Dorsolateral prefrontal cortex (tissue), 120 donors: ENCODE measurements at regions of chr7 and their contacts with region 1.

Region 1: GRCh38 chr7:139702811-139703486 is 74.8 kb downstream of the HIPK2 start:
- DNase-seq: no peak
- H3K4me3 ChIP-seq: peak overlapping the region in 2 of 59 donors; percentile 6 to 15
- H3K27ac ChIP-seq: peak overlapping the region; percentile 50 to 93 (median 86)
- H3K27me3 ChIP-seq: no peaks in the 10 kb centered on the region
- CTCF ChIP-seq: peak in 4 of 56 donors; percentile 5 to 27 (median 16)

Region 2: DNA sequence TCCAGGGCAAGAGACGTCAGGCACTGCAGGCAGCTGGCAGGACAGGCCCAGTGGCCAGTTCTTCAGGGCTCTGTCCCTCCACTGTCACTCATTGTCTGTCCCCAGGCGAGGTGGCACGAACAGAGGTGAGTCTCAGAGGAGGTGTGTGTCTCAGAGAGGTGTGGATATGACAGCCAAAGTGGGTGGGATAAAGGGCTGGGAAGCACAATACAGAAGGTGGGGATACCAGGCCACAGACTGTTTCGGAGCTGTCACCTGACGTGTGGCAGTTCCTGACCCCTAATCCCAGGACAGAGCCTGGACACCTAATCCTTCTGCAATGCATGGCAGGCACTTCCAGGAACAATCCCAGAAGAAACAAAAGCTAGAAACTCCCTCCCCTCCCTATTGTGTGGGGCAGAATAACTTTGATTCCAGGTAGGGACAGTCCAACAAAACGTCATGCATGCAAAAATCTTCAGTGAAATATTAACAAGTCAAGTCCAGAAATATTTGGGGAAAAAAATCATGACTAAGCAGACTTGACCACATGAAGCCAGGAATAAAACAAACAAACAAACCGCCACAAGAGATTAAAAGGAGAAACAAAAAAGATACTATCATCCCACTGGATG is 231.1 kb before region 1 on chr7:
- intact Hi-C with region 1: no loop called
- DNase-seq: no peak
- H3K4me3 ChIP-seq: no peak overlapping the region
- H3K27ac ChIP-seq: no peak overlapping the region
- H3K27me3 ChIP-seq: no peaks in the 10 kb centered on the region
- CTCF ChIP-seq: no peak

Region 3: GRCh38 chr7:139635526-139636302 is 67.2 kb before region 1 on chr7:
- intact Hi-C with region 1: no loop called
- DNase-seq: no peak
- H3K4me3 ChIP-seq: no peak overlapping the region
- H3K27ac ChIP-seq: peak overlapping the region; percentile 5 to 98 (median 80)
- H3K27me3 ChIP-seq: no peaks in the 10 kb centered on the region
- CTCF ChIP-seq: peak in 1 of 56 donors; percentile 14

Region 4: DNA sequence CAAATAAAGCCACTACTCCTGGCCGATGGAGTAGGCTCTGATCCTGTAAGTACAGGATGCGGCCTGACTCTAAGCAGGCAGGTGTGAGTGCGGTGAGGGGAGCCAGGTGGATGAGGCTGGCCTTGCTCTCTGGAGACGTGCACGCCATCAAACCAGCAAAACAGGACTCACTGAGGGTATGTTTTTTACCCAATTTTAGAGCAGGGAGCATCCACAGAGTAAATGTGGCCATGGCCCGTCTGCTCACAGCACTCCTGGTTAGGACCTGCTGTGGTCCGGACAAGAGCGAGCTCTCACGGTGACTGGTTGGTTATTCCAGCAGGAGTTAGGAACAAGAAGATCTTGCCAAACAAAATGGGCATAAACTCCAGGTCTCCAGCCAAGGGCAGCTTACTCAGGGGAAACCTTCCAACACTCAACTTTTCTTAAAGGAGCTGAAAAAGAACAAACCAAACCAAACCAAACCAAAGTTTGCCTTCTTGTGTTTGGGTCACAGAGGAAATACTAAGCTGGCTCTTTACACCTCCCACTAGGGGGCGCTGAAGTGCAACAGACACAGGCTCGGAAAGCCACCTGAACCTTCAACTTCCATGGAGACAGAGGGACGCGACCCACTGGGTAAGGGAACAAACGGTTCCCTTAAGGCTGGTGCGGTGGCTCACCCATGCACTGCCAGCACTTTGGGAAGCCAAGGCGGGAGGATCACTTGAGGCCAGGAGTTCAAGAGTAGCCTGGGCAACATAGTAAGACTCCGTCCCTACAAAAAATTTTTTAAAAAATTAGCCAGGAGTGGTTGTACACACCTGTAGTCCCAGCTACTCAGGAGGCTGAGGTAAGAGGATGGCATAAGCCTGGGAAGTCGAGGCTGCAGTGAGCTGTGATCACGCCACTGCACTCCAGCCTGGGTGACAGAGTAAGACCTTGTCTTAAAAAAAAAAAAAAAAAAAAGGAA is 57.1 kb before region 1 on chr7:
- intact Hi-C with region 1: loop called in 1 of 2 experiments (anchors 5 kb)
- DNase-seq: peak; percentile 66 to 89 (median 86)
- H3K4me3 ChIP-seq: peak overlapping the region in 3 of 59 donors; percentile 13 to 26 (median 16)
- H3K27ac ChIP-seq: peak overlapping the region in 58 of 59 donors; percentile 35 to 98 (median 92)
- H3K27me3 ChIP-seq: no peaks in the 10 kb centered on the region
- CTCF ChIP-seq: peak; percentile 80 to 97 (median 91)

Region 5: GRCh38 chr7:139651914-139652313 is 51.0 kb before region 1 on chr7:
- intact Hi-C with region 1: loop called (anchors 2 to 5 kb)
- DNase-seq: no peak
- H3K4me3 ChIP-seq: no peak overlapping the region
- H3K27ac ChIP-seq: peak overlapping the region; percentile 33 to 98 (median 92)
- H3K27me3 ChIP-seq: no peaks in the 10 kb centered on the region
- CTCF ChIP-seq: no peak

Region 6: GRCh38 chr7:139777948-139778841 is 75.2 kb after region 1 on chr7 and contains the start of gene HIPK2:
- intact Hi-C with region 1: loop called (anchors 10 kb)
- DNase-seq: peak; percentile 57 to 83 (median 74)
- H3K4me3 ChIP-seq: peak within 1 kb of the TSS; percentile 73 to 94 (median 86)
- H3K27ac ChIP-seq: peak within 1 kb of the TSS; percentile 81 to 99 (median 96)
- H3K27me3 ChIP-seq: no peaks in the 10 kb centered on the region
- CTCF ChIP-seq: peak in 5 of 56 donors; percentile 2 to 17 (median 13)
- total RNA-seq, gene HIPK2: 106 to 688 (median 242) TPM

Region 7: DNA sequence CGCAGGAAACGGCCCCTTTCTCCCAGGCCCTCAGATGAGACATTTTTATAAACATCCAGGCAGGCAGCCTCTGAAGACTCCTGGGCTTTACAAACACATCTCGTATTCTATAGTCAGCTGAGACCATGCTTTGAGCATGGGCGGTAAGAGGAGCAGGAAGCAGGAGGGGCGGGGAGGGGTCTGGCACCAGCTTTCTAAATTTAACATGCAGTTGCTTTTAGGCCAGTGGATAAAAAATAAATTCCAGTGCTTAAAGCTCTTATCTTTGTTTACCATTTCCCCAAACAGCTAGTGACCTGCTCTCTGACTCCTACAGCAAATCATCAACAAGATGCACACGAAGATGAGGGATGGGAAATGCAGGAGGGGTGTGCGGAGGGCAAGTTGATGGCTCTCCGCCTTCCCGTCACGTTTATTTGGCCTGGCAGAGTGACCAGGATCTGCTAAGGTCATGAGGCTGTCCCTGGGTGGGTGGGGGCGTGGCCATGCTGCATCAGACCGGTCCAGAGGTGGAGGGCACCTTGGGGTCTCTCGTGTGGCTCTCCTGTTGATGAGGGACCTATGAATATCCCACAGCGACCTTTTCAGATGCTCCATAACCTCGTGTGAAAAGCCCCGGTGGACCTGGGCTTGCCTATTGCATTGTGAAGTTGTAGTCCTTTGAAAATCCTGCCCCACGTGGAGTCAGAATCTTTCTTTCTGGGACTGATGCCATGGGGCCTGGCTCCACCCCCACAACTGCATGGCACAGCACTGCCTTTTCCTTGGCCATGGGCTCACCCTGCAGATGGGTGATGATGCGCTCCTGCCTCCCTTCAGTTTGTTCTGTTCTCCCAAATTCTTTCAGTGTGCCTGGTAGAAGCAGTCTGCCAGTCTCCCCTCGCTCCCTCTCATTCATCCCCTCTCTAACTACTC is 292.3 kb after region 1 on chr7:
- intact Hi-C with region 1: loop called in 1 of 2 experiments (anchors 10 kb)
- DNase-seq: peak; percentile 15 to 90 (median 84)
- H3K4me3 ChIP-seq: no peak overlapping the region
- H3K27ac ChIP-seq: peak overlapping the region in 58 of 59 donors; percentile 67 to 97 (median 92)
- H3K27me3 ChIP-seq: no peaks in the 10 kb centered on the region
- CTCF ChIP-seq: peak in 22 of 56 donors; percentile 9 to 50 (median 20)